ENCODE measurements at regions of chr1 and their contacts with region 1.

Region 1: DNA sequence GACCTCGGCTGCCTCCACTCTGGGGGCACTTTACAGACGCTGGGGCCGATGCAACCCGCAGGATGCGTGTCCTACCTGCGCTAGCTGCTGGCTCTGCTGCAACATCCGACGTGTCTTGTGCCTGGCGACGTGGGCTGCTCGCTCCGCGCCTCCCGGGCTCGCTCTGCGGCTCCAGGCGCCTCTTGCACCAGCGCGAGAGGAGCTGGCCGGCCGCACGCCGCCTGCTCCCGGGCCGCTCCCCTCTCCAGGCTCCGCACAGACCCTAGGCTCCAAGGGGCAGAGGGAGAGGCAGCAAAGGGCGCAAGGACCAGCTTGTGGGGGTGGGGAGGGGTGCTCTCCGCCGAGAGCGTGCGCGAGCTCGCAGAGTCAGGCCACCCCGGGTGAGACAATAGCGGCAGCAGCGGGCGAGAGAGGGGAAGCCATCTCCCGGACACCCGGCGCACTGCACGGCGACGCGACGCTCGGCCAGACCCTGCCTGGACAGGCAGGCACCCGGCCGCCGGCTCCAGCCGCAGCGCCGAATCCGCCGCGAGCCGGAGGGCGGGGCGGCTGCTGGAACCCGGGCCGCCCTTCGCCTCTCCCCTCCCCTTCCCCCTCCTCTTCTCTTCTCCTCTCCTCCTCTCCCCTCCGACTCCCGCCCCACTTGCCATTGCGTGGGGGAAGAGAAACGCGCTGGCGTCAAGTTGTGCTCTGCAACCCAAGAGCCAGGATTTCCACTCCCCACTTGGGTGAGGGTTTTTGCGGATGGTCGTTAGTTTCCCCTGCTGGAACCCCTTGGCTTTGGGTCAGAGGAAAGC is at the start of gene PIK3C2B:
- DNase-seq: peak; percentile 88
- H3K4me3 ChIP-seq: peak within 1 kb of the TSS; percentile 56 to 85 (median 64)
- H3K27ac ChIP-seq: peak within 1 kb of the TSS; percentile 63
- H3K4me1 ChIP-seq: peaks cover 18% of the 10 kb centered on the region
- H3K27me3 ChIP-seq: no peaks in the 10 kb centered on the region
- CTCF ChIP-seq: peak; percentile 49 to 64
- POLR2A ChIP-seq: peak; percentile 82
- total RNA-seq, gene PIK3C2B: 41.8 and 49.0 TPM in 2 replicates

Region 2: DNA sequence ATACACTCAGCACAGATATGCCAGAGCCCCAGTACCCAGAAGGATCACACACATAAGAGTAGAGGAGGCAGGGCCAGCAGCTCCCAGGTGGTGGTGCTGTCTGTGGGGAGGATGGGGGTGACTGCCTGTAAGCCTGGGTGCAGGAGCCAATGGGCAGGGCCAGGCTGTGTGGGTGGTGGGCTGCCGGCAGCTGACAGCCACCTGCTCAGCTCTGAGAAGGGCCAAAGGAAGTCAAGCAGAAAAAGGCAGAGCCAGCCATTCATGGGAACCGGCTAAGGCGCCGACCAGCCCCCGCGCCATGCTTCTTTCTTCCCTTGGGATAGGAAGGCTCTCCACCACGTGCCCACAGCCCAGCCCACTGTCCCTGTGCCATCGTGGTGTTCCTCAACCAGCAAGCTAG is 14.0 kb before region 1 on chr1:
- CTCF ChIA-PET with region 1: interaction called, 60 read pairs
- POLR2A ChIA-PET with region 1: no interaction called
- dilution Hi-C with region 1: no loop called
- intact Hi-C with region 1: loop called (anchors 1 kb)
- DNase-seq: no peak
- H3K4me3 ChIP-seq: no peak overlapping the region
- H3K27ac ChIP-seq: no peak overlapping the region
- H3K4me1 ChIP-seq: peaks cover 27% of the 10 kb centered on the region
- H3K27me3 ChIP-seq: no peaks in the 10 kb centered on the region
- CTCF ChIP-seq: no peak
- POLR2A ChIP-seq: no peak